Activated CD8-positive, alpha-beta T cell treated with anti-CD3 and anti-CD28 coated beads for 36 hours (primary cell): ENCODE measurements at regions of chr22 and their contacts with region 1.

Region 1: GRCh38 chr22:43036282-43036829 is 21.4 kb upstream of the PACSIN2 start:
- DNase-seq: no peak
- ATAC-seq: no peak
- H3K4me3 Mint-ChIP-seq: no peak overlapping the region
- H3K27ac Mint-ChIP-seq: no peak overlapping the region
- H3K4me1 Mint-ChIP-seq: peaks cover 4% of the 10 kb centered on the region
- H3K27me3 Mint-ChIP-seq: no peaks in the 10 kb centered on the region
- CTCF ChIP-seq: no peak

Region 2: GRCh38 chr22:42868751-42869251 is 167.6 kb before region 1 on chr22:
- CTCF ChIA-PET with region 1: interaction called, 18 read pairs
- POLR2A ChIA-PET with region 1: no interaction called
- intact Hi-C with region 1: no loop called
- DNase-seq: no peak
- ATAC-seq: no peak
- H3K4me3 Mint-ChIP-seq: no peak overlapping the region
- H3K27ac Mint-ChIP-seq: no peak overlapping the region
- H3K4me1 Mint-ChIP-seq: peaks cover 12% of the 10 kb centered on the region
- H3K27me3 Mint-ChIP-seq: no peaks in the 10 kb centered on the region
- CTCF ChIP-seq: no peak

Region 3: GRCh38 chr22:42895087-42895486 is 141.3 kb before region 1 on chr22:
- CTCF ChIA-PET with region 1: interaction called, 11 read pairs
- POLR2A ChIA-PET with region 1: no interaction called
- intact Hi-C with region 1: no loop called
- DNase-seq: peak; percentile 46
- ATAC-seq: peak; percentile 82
- H3K4me3 Mint-ChIP-seq: no peak overlapping the region
- H3K27ac Mint-ChIP-seq: peak overlapping the region; percentile 5
- H3K4me1 Mint-ChIP-seq: peaks cover 32% of the 10 kb centered on the region
- H3K27me3 Mint-ChIP-seq: no peaks in the 10 kb centered on the region
- CTCF ChIP-seq: no peak

Region 4: DNA sequence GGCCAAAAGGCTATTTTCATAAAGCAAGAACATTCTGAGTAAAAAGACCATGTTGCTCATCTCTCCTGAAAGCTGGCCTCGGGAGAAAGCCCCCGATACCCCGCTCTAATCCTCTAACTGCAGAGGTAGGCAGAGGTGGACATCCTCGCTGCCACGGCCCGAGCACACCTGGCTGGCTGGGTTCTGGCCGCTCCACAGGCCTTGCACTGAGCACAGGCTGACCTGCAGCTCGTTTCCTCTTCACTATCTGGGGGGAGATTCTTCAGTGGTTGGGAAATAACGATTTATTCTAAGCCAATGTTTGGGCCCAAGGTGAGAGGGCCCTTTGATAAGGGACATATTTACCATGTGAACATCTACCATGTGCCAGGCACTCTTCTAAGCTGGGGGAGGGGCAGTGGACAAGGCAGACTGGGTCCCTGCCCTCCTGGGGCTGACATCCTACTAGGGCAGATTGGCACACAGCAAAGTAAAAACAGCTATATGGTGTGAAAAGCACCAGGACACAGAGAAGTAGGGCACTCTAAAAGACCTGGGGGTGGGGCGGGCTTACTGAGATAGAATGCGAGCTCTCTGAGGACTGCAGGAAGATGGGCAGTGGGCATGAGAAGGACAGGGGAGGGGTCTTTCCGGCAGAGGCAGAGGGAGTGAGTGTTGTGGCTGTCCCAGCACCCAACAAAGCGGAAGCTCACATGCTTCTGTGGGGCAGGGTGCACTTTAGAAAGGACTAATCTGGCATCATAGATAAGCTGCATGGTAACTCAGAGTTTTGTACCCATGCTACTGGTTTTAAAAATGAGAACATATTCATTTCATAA is 113.8 kb before region 1 on chr22:
- CTCF ChIA-PET with region 1: interaction called, 11 read pairs
- POLR2A ChIA-PET with region 1: no interaction called
- intact Hi-C with region 1: no loop called
- DNase-seq: no peak
- ATAC-seq: no peak
- H3K4me3 Mint-ChIP-seq: no peak overlapping the region
- H3K27ac Mint-ChIP-seq: no peak overlapping the region
- H3K4me1 Mint-ChIP-seq: peaks cover 44% of the 10 kb centered on the region
- H3K27me3 Mint-ChIP-seq: no peaks in the 10 kb centered on the region
- CTCF ChIP-seq: no peak

Region 5: DNA sequence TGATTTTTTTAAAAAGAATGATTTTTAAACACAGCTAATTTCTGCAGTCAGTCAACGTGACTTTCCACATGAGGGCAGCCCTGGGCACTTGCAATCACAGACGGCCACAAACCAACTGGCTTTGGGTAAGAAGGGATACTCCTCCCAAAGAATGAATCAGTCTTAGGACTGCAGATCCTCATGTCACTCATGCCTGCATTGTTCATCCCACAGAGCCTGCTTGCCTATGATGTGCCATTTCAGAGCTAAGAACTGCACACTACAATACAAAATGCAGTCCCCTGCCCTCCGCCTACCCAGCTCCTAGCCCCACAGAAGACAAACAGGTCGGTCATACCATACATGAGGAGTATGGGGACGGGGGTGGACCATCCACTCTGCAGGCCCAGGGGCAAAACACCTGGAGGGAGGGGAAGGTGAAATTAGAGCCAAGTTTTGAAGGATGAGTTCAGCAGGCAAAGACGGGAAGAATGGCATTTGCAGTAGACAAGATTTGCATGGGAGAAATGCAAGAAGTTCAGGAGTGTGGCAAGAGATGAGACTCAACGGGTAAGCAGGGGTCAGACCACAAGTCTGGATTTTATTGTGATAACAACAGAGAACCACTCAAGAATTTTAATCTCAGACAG is 46.1 kb before region 1 on chr22:
- CTCF ChIA-PET with region 1: interaction called, 10 read pairs
- POLR2A ChIA-PET with region 1: no interaction called
- intact Hi-C with region 1: no loop called
- DNase-seq: no peak
- ATAC-seq: no peak
- H3K4me3 Mint-ChIP-seq: no peak overlapping the region
- H3K27ac Mint-ChIP-seq: no peak overlapping the region
- H3K4me1 Mint-ChIP-seq: peaks cover 23% of the 10 kb centered on the region
- H3K27me3 Mint-ChIP-seq: no peaks in the 10 kb centered on the region
- CTCF ChIP-seq: no peak